Ovary (tissue), 10 donors: ENCODE measurements at regions of chr1 and their contacts with region 1.

Region 1: GRCh38 chr1:189719744-189720143 is 757.9 kb downstream of the BRINP3 start:
- DNase-seq: no peak
- H3K4me3 ChIP-seq: no peak overlapping the region
- H3K27ac ChIP-seq: no peak overlapping the region
- H3K4me1 ChIP-seq: no peaks in the 10 kb centered on the region
- H3K27me3 ChIP-seq: no peaks in the 10 kb centered on the region
- CTCF ChIP-seq: no peak
- EP300 ChIP-seq: no peak
- POLR2A ChIP-seq: no peak

Region 2: DNA sequence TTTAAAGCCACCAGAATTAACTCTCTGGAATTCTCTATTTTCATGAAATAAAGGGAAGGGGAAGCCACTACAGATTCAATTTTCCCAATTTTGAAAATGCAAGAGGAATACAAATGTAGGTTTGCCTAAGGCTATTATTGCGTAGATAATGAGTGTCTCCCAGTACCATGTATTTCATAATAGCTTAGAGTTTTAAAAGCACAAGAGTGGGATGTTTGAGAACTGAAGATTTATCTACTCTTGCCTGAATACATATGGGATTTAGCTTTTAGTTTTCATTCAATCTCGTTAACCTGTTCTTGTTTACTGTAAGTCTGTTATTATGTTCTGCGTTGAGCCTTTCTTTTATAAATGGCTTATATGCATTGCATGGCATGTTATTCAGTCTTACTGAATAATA is 37.2 kb before region 1 on chr1:
- intact Hi-C with region 1: loop called in 1 of 4 experiments (anchors 2 kb)
- DNase-seq: no peak
- H3K4me3 ChIP-seq: no peak overlapping the region
- H3K27ac ChIP-seq: no peak overlapping the region
- H3K4me1 ChIP-seq: no peaks in the 10 kb centered on the region
- H3K27me3 ChIP-seq: no peaks in the 10 kb centered on the region
- CTCF ChIP-seq: no peak
- EP300 ChIP-seq: no peak
- POLR2A ChIP-seq: no peak